CD8-positive, alpha-beta memory T cell (primary cell): ENCODE measurements at regions of chr9 and their contacts with region 1.

Region 1: GRCh38 chr9:35657546-35658136 is at the start of gene RMRP:
- DNase-seq: peak; percentile 76 to 94 (median 91)
- H3K4me3 ChIP-seq: peak within 1 kb of the TSS; percentile 90
- H3K4me3 Mint-ChIP-seq: peak within 1 kb of the TSS; percentile 84 to 97 (median 92)
- H3K27ac ChIP-seq: peak within 1 kb of the TSS; percentile 99
- H3K27ac Mint-ChIP-seq: peak within 1 kb of the TSS; percentile 97 to 100 (median 99)
- H3K4me1 ChIP-seq: peaks cover 60% of the 10 kb centered on the region
- H3K4me1 Mint-ChIP-seq: peaks cover 61 to 79% (median 72%) of the 10 kb centered on the region in 3 donors
- H3K27me3 ChIP-seq: no peaks in the 10 kb centered on the region
- H3K27me3 Mint-ChIP-seq: peaks cover 4 to 9% of the 10 kb centered on the region in 2 donors
- total RNA-seq, gene RMRP: 7,718 to 11,549 TPM

Region 2: GRCh38 chr9:35611230-35611797 is 46.3 kb before region 1 on chr9:
- CTCF ChIA-PET with region 1: interaction called, 72 read pairs
- POLR2A ChIA-PET with region 1: interaction called, 6 read pairs
- DNase-seq: peak; percentile 37 to 68 (median 44)
- H3K4me3 ChIP-seq: no peak overlapping the region
- H3K4me3 Mint-ChIP-seq: peak overlapping the region in 2 of 7 donors; percentile 61 to 67
- H3K27ac ChIP-seq: no peak overlapping the region
- H3K27ac Mint-ChIP-seq: peak overlapping the region; percentile 3 to 84 (median 66)
- H3K4me1 ChIP-seq: peaks cover 11% of the 10 kb centered on the region
- H3K4me1 Mint-ChIP-seq: peaks cover 21 to 26% (median 26%) of the 10 kb centered on the region in 3 donors
- H3K27me3 ChIP-seq: no peaks in the 10 kb centered on the region
- H3K27me3 Mint-ChIP-seq: peaks cover 0 to 1% of the 10 kb centered on the region in 2 donors

Region 3: GRCh38 chr9:35675732-35676392 is 18.2 kb after region 1 on chr9:
- CTCF ChIA-PET with region 1: interaction called, 12 read pairs
- POLR2A ChIA-PET with region 1: interaction called, 3 read pairs
- DNase-seq: peak in 4 of 5 donors; percentile 25 to 69 (median 33)
- H3K4me3 ChIP-seq: no peak overlapping the region
- H3K4me3 Mint-ChIP-seq: peak overlapping the region in 6 of 7 donors; percentile 71 to 87 (median 79)
- H3K27ac ChIP-seq: no peak overlapping the region
- H3K27ac Mint-ChIP-seq: peak overlapping the region in 1 of 8 donors; percentile 80
- H3K4me1 ChIP-seq: no peaks in the 10 kb centered on the region
- H3K4me1 Mint-ChIP-seq: peaks cover 11 to 20% (median 20%) of the 10 kb centered on the region in 3 donors
- H3K27me3 ChIP-seq: no peaks in the 10 kb centered on the region
- H3K27me3 Mint-ChIP-seq: peaks cover 11 to 13% of the 10 kb centered on the region in 2 donors

Region 4: GRCh38 chr9:35748858-35749514 is 91.3 kb after region 1 on chr9 and contains the starts of genes GBA2 and RGP1:
- CTCF ChIA-PET with region 1: interaction called, 10 read pairs
- POLR2A ChIA-PET with region 1: no interaction called
- DNase-seq: peak; percentile 59 to 79 (median 66)
- H3K4me3 ChIP-seq: peak within 1 kb of the TSS; percentile 88
- H3K4me3 Mint-ChIP-seq: peak within 1 kb of the TSS; percentile 91 to 98 (median 96)
- H3K27ac ChIP-seq: peak within 1 kb of the TSS; percentile 75
- H3K27ac Mint-ChIP-seq: peak within 1 kb of the TSS; percentile 83 to 98 (median 93)
- H3K4me1 ChIP-seq: peaks cover 38% of the 10 kb centered on the region
- H3K4me1 Mint-ChIP-seq: peaks cover 36 to 67% (median 44%) of the 10 kb centered on the region in 3 donors
- H3K27me3 ChIP-seq: no peaks in the 10 kb centered on the region
- H3K27me3 Mint-ChIP-seq: no peaks in the 10 kb centered on the region
- total RNA-seq, gene GBA2: 41.8 to 42.0 TPM
- total RNA-seq, gene RGP1: 19.9 to 21.9 TPM